CD14-positive monocyte (primary cell): ENCODE measurements at regions of chr2 and their contacts with region 1.

Region 1: DNA sequence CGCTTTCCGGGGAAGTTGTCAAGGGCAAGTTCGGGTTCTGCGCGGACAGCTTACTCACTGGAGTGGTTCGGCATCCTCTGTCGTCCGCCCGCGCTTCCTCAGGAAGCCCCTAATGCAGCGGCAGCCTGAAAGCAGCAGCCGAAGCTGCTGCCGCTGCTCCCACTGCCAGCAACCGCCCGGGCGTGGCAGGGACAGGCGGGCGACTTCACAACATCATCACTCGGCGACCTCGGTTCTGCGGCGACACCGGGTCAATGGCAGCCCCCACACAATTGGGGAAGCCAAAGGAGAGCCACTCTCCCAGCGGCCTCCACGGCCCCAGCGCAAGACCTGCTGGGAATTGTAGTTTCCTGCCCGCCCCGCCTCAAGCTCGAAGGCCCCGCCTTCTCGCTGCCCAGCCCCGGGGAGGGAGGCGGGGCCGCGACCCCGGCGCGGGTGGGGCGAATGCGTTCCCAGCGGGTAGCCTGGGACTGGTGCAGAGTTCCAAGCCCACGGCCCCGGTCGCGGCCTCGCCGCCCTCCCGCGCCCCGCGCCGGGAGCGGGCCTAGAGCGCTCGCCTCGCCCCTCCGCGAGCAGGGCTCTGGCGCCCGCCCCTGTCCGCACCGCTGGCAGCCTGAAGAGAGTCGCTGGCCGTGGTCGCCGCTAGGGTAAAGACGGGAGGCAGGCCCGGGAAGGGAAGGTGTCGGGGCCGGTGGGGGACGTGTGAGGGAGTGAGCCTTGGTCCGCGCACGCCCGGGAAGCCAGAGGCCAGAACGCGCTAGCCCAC is at the starts of genes STRADB and TRAK2:
- DNase-seq: peak; percentile 91 to 96 (median 94)
- H3K4me3 ChIP-seq: peak within 1 kb of the TSS; percentile 76 to 94 (median 82)
- H3K4me3 Mint-ChIP-seq: peak within 1 kb of the TSS; percentile 94 to 97
- H3K27ac ChIP-seq: peak within 1 kb of the TSS; percentile 79 to 90
- H3K27ac Mint-ChIP-seq: peak within 1 kb of the TSS; percentile 91 to 99 (median 96)
- H3K4me1 ChIP-seq: peaks cover 12 to 19% of the 10 kb centered on the region in 2 donors
- H3K4me1 Mint-ChIP-seq: peaks cover 22% of the 10 kb centered on the region
- H3K27me3 ChIP-seq: no peaks in the 10 kb centered on the region
- H3K27me3 Mint-ChIP-seq: peaks cover 0 to 2% (median 2%) of the 10 kb centered on the region in 3 donors
- CTCF ChIP-seq: peak; percentile 30
- polyA plus RNA-seq, gene STRADB: 6.9 to 25.6 (median 22.0) TPM
- polyA plus RNA-seq, gene TRAK2: 7.6 to 16.8 (median 15.3) TPM

Region 2: GRCh38 chr2:200888704-200889625 is 562.5 kb before region 1 on chr2 and contains the starts of genes NIF3L1 and PPIL3:
- intact Hi-C with region 1: loop called in 1 of 2 experiments (anchors 10 kb)
- DNase-seq: peak; percentile 97 to 98 (median 97)
- H3K4me3 ChIP-seq: peak within 1 kb of the TSS; percentile 84 to 96 (median 89)
- H3K4me3 Mint-ChIP-seq: peak within 1 kb of the TSS; percentile 94 to 96
- H3K27ac ChIP-seq: peak within 1 kb of the TSS; percentile 96 to 98
- H3K27ac Mint-ChIP-seq: peak within 1 kb of the TSS; percentile 94 to 100 (median 99)
- H3K4me1 ChIP-seq: peaks cover 16 to 30% of the 10 kb centered on the region in 2 donors
- H3K4me1 Mint-ChIP-seq: peaks cover 29% of the 10 kb centered on the region
- H3K27me3 ChIP-seq: no peaks in the 10 kb centered on the region
- H3K27me3 Mint-ChIP-seq: peaks cover 0 to 1% (median 0%) of the 10 kb centered on the region in 3 donors
- CTCF ChIP-seq: no peak
- polyA plus RNA-seq, gene NIF3L1: 16.2 to 18.0 (median 16.9) TPM
- polyA plus RNA-seq, gene PPIL3: 12.3 to 34.6 (median 20.4) TPM

Region 3: GRCh38 chr2:201378496-201379397 is 72.7 kb before region 1 on chr2:
- intact Hi-C with region 1: no loop called
- DNase-seq: no peak
- H3K4me3 ChIP-seq: no peak overlapping the region
- H3K4me3 Mint-ChIP-seq: no peak overlapping the region
- H3K27ac ChIP-seq: no peak overlapping the region
- H3K27ac Mint-ChIP-seq: peak overlapping the region in 1 of 7 donors; percentile 77
- H3K4me1 ChIP-seq: no peaks in the 10 kb centered on the region
- H3K4me1 Mint-ChIP-seq: no peaks in the 10 kb centered on the region
- H3K27me3 ChIP-seq: no peaks in the 10 kb centered on the region
- H3K27me3 Mint-ChIP-seq: no peaks in the 10 kb centered on the region
- CTCF ChIP-seq: no peak

Region 4: GRCh38 chr2:201597397-201597796 is 145.9 kb after region 1 on chr2:
- intact Hi-C with region 1: no loop called
- DNase-seq: no peak
- H3K4me3 ChIP-seq: no peak overlapping the region
- H3K4me3 Mint-ChIP-seq: no peak overlapping the region
- H3K27ac ChIP-seq: no peak overlapping the region
- H3K27ac Mint-ChIP-seq: no peak overlapping the region
- H3K4me1 ChIP-seq: no peaks in the 10 kb centered on the region
- H3K4me1 Mint-ChIP-seq: no peaks in the 10 kb centered on the region
- H3K27me3 ChIP-seq: no peaks in the 10 kb centered on the region
- H3K27me3 Mint-ChIP-seq: peaks cover 0 to 8% (median 4%) of the 10 kb centered on the region in 3 donors
- CTCF ChIP-seq: no peak

Region 5: GRCh38 chr2:201642579-201643215 is 191.2 kb after region 1 on chr2:
- intact Hi-C with region 1: loop called in 1 of 2 experiments (anchors 10 kb)
- DNase-seq: peak; percentile 59 to 70 (median 66)
- H3K4me3 ChIP-seq: peak overlapping the region; percentile 56 to 95 (median 79)
- H3K4me3 Mint-ChIP-seq: peak overlapping the region; percentile 92 to 96
- H3K27ac ChIP-seq: peak overlapping the region; percentile 4 to 69
- H3K27ac Mint-ChIP-seq: peak overlapping the region; percentile 57 to 92 (median 85)
- H3K4me1 ChIP-seq: peaks cover 8 to 12% of the 10 kb centered on the region in 2 donors
- H3K4me1 Mint-ChIP-seq: peaks cover 12% of the 10 kb centered on the region
- H3K27me3 ChIP-seq: peaks cover 0 to 3% of the 10 kb centered on the region in 2 donors
- H3K27me3 Mint-ChIP-seq: peaks cover 2 to 9% (median 5%) of the 10 kb centered on the region in 3 donors
- CTCF ChIP-seq: no peak

Region 6: DNA sequence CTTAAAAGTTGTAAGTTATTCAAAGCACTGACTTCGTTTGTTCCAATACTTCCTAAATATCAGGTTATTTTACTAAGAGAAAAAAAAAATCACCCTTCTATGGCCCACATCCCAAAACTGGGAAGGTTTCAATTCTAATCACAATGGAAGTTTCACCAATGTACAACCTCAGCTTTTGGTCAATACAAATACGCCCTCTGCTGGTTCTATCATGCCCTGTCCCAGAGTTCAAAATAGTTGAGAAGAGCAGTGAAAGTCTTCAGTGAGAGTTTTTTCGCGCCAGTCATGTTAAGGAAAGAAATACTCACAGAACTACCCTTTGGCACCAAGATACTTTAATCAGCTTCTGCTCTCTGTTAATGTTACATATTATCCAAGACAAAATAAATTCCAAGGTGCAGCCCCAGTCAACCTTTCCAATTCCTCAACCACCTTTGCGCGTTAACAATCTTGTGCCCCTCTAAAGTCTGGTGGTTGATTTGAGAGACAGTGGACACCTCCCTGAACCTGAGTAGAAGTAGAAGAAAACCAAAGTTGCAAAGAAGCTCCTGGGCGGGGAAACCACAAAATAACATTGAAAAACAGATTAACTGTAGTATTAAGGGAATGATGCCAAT is 727.0 kb after region 1 on chr2:
- intact Hi-C with region 1: no loop called
- DNase-seq: peak; percentile 21 to 49 (median 37)
- H3K4me3 ChIP-seq: no peak overlapping the region
- H3K4me3 Mint-ChIP-seq: no peak overlapping the region
- H3K27ac ChIP-seq: no peak overlapping the region
- H3K27ac Mint-ChIP-seq: no peak overlapping the region
- H3K4me1 ChIP-seq: no peaks in the 10 kb centered on the region
- H3K4me1 Mint-ChIP-seq: no peaks in the 10 kb centered on the region
- H3K27me3 ChIP-seq: no peaks in the 10 kb centered on the region
- H3K27me3 Mint-ChIP-seq: peaks cover 2 to 3% (median 2%) of the 10 kb centered on the region in 3 donors
- CTCF ChIP-seq: peak; percentile 82